IMR-90 (cell line): ENCODE measurements at regions of chr18 and their contacts with region 1.

Region 1: GRCh38 chr18:79528846-79529245 is 133.1 kb downstream of the NFATC1 start:
- DNase-seq: peak; percentile 64
- ATAC-seq: peak; percentile 92
- H3K4me3 ChIP-seq: no peak overlapping the region
- H3K27ac ChIP-seq: no peak overlapping the region
- H3K4me1 ChIP-seq: no peaks in the 10 kb centered on the region; the same call in 1 of the 2 replicates
- H3K27me3 ChIP-seq: peaks cover 15% of the 10 kb centered on the region
- CTCF ChIP-seq: peak; percentile 88
- POLR2A ChIP-seq: 0 out of 2 replicates have a peak, but pooled peaks have one; percentile 30
- RAD21 ChIP-seq: peak; percentile 97

Region 2: DNA sequence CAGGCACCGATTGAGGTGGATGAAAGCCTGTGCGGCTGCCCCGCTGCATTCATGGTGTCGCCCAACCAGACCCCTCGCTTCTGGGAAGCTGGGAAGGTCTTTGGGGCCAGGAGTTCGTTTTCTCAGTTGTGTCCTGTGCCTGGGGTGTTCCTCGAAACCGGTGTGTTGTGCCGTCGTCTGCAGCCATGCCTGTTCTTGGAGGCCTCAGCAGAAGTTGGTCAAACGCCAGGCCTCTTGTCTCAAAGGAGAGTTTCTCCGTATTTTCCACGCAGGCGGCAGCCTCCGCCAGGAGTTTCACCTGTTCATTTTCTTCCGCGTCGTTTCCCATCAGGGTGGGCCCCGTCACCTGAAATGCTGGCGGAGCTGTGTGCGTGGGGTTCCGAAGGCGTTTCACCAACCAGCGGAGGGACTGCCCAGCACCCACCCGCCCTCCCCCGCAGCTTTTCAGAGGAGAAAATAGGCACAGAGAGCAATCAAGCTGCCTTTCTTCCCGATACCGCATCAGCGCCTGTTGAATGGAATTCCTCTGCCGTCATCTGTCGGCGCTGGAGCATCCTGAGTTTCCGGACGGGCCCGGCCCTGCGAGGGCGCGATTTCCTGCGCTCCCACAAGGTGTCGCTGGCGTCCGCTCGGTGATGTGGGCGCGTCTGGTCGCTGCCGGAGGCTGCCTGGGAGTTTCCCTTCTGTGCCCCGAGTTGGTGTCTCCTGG is 150.2 kb before region 1 on chr18:
- CTCF ChIA-PET with region 1: interaction called, 5 read pairs
- POLR2A ChIA-PET with region 1: no interaction called
- dilution Hi-C with region 1: no loop called
- in situ Hi-C with region 1: loop called (anchors 5 kb)
- intact Hi-C with region 1: loop called (anchors 1 kb)
- DNase-seq: peak; percentile 74
- ATAC-seq: peak; percentile 93
- H3K4me3 ChIP-seq: no peak overlapping the region
- H3K27ac ChIP-seq: no peak overlapping the region
- H3K4me1 ChIP-seq: no peaks in the 10 kb centered on the region
- H3K27me3 ChIP-seq: no peaks in the 10 kb centered on the region
- CTCF ChIP-seq: peak; percentile 97
- POLR2A ChIP-seq: no peak; the same call in 1 of the 2 replicates
- RAD21 ChIP-seq: peak; percentile 93

Region 3: DNA sequence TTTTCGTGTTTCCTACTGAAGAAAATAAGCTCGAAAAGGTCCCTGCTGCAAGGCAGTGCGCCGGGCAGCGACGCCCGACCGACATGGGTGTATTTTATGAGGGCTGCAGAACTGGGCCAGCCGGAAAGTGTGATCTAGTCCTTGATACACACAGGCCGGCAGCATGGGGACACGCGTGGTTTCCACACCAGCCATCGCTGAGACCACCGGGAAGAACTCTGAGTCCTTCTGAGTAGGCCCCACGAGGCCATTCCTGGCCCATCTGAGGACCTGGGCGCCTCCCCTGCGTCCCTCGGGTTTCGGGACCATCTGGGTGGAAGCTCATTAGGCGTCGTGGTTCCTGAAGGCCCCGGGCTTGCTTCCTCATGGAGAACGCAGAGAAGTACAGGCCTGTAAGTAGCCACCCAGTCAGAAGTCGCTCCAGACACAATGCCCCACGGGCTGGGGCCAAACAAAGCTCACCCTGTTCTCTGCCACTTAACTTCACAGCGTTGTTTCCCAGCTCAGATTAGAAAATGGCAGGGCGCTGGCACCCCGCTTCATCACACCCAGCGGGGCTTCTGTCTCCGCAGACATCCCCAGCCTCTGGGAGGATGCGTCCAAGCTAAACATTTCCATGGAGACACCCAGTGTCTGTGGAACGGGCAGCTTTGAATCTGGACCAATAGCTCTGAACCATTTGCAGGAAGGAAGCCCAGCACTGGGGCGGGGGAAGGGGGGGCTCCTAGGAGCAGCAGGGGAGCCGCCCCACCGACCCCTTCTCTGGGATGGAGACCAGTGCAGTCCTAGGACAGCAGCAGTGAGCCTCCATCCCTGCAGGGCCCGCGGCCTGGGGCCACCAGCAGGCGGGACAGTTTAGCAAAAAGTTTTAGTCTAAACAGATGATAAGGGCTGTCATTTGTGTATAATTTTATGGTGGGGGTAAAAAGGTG is 130.8 kb before region 1 on chr18:
- CTCF ChIA-PET with region 1: no interaction called
- POLR2A ChIA-PET with region 1: no interaction called
- dilution Hi-C with region 1: no loop called
- in situ Hi-C with region 1: no loop called
- intact Hi-C with region 1: loop called (anchors 1 kb)
- DNase-seq: no peak
- ATAC-seq: no peak
- H3K4me3 ChIP-seq: no peak overlapping the region
- H3K27ac ChIP-seq: no peak overlapping the region
- H3K4me1 ChIP-seq: peaks cover 4% of the 10 kb centered on the region
- H3K27me3 ChIP-seq: peaks cover 4% of the 10 kb centered on the region; the same call in 1 of the 2 replicates
- CTCF ChIP-seq: no peak
- POLR2A ChIP-seq: no peak
- RAD21 ChIP-seq: no peak

Region 4: GRCh38 chr18:79644006-79644665 is 115.3 kb after region 1 on chr18:
- CTCF ChIA-PET with region 1: no interaction called
- POLR2A ChIA-PET with region 1: no interaction called
- dilution Hi-C with region 1: no loop called
- in situ Hi-C with region 1: no loop called
- intact Hi-C with region 1: loop called (anchors 1 kb)
- DNase-seq: peak; percentile 47
- ATAC-seq: peak; percentile 92
- H3K4me3 ChIP-seq: no peak overlapping the region
- H3K27ac ChIP-seq: no peak overlapping the region
- H3K4me1 ChIP-seq: no peaks in the 10 kb centered on the region
- H3K27me3 ChIP-seq: peaks cover 24% of the 10 kb centered on the region
- CTCF ChIP-seq: peak; percentile 85
- POLR2A ChIP-seq: no peak
- RAD21 ChIP-seq: peak; percentile 95